RWPE1 (cell line): ENCODE measurements at regions of chr20 and their contacts with region 1.

Region 1: GRCh38 chr20:47677635-47678453 is 107.4 kb downstream of the SULF2 start:
- DNase-seq: peak; percentile 93
- H3K27ac ChIP-seq: peak overlapping the region; percentile 61
- CTCF ChIP-seq: peak; percentile 95

Region 2: GRCh38 chr20:47792021-47792618 is 114.3 kb after region 1 on chr20:
- CTCF ChIA-PET with region 1: no interaction called
- POLR2A ChIA-PET with region 1: no interaction called
- DNase-seq: peak; percentile 84
- H3K27ac ChIP-seq: peak overlapping the region; percentile 98
- CTCF ChIP-seq: no peak

Region 3: DNA sequence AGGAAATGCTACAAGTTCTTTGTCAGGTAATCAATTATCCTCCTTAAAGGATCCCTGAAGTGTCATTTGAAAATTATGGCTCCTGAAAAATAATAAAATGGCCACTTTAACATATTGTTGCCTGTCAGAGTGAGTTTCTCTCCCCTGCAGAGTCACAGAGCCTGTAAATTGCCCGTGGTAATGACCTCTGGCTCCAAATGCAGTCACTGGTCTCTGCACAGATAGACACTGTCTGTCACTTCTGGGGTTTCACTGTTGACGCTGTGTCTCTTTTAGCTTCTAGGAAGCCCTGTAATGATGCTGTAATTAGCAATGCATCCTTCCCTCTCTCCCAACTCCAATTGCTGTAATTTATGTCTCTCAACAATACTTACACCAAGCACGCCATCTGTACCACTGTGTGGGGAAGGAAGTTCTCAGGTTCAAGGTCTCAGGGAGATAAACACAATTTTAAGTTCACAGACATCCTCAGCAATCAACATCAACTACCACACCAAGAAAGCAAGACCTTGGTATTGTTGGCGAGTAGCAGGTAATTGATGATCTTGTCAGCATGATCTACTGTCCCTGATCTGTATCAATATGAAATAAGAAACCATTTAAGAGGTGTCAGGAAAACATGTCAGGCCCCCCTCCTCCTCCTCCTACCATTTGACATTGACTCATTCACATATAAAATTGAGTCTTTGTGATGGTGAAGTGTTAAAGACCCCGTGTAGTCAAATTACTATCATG is 198.6 kb after region 1 on chr20:
- CTCF ChIA-PET with region 1: no interaction called
- POLR2A ChIA-PET with region 1: no interaction called
- DNase-seq: no peak
- H3K27ac ChIP-seq: no peak overlapping the region
- CTCF ChIP-seq: no peak

Region 4: DNA sequence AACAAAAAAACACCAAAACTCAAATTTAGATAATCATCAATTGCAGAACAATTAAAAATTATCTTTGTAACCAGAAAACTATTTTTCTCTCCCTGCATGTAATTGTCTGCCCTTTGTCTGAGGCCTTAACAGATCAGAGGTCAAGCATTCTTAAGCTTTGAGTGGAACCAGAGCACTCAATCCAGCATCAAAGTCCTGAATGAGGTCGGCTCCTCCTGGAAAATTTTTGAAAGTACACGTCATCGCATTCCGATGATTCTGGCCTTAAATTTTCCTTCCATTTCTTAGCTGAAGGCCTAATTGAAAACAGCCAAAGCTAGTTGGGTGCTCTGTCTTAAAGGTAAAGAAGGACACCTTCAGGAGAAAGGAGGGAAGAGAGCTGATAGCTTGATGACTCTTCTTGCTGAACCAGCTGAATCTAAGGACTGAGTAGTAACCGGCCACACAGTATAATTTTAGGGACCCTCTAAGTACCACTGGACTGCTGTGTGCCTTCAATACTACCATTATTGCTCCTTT is 617.7 kb after region 1 on chr20:
- CTCF ChIA-PET with region 1: interaction called, 14 read pairs
- POLR2A ChIA-PET with region 1: interaction called, 3 read pairs
- DNase-seq: peak; percentile 97
- H3K27ac ChIP-seq: peak overlapping the region; percentile 78
- CTCF ChIP-seq: peak; percentile 87